ENCODE measurements at regions of chr15 and their contacts with region 1.

Region 1: GRCh38 chr15:88828791-88829190 is 25.6 kb downstream of the ACAN start:
- ATAC-seq: no peak
- H3K4me3 ChIP-seq: no peak overlapping the region
- H3K27ac ChIP-seq: no peak overlapping the region
- H3K4me1 ChIP-seq: no peaks in the 10 kb centered on the region

Region 2: DNA sequence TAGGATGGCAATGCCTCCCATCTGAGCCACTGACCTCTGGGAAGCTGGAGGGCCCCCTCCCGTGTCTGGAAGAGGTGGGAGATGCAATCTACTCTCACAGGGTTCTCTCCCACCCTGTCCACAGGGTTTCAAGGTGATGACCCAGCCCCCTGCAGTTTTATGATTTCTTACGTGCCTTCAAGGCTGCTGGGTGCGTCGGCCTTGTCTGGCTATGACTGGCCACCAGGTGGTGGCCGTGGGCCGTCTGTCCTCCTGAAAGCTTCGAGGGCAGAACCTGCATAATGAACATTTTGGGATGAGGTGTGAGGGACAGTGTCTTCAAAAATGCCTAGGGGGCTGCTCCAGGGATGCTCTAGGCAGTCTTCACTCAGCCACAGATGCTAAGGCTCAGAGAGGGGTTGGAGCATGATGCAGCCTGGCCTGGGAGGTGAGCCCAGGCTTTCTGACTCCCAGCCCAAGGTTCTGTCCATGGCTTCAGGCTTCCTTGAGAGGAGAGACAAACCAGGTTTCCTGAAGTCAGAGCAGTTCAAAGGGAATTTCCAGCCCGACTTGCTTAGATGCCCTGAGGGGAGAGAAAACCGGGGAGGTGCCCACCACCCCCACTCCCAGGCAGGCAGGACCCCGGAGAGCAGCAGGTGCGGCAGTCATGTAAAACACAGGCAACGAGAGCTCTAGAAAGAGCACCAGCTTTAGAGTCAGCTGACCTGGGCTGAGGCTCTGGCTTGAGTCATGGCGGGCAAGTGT is 171.3 kb before region 1 on chr15:
- in situ Hi-C with region 1: loop called in 2 of 9 experiments (anchors 10 kb)
- ATAC-seq: peak; percentile 68 to 85 (median 75)
- H3K4me3 ChIP-seq: no peak overlapping the region
- H3K27ac ChIP-seq: no peak overlapping the region
- H3K4me1 ChIP-seq: peaks cover 0 to 6% of the 10 kb centered on the region in 2 donors

Region 3: GRCh38 chr15:88664151-88664778 is 164.5 kb before region 1 on chr15:
- in situ Hi-C with region 1: loop called in 2 of 9 experiments (anchors 10 kb)
- ATAC-seq: no peak
- H3K4me3 ChIP-seq: no peak overlapping the region
- H3K27ac ChIP-seq: no peak overlapping the region
- H3K4me1 ChIP-seq: no peaks in the 10 kb centered on the region